ENCODE measurements at regions of chr4 and their contacts with region 1.

Region 1: DNA sequence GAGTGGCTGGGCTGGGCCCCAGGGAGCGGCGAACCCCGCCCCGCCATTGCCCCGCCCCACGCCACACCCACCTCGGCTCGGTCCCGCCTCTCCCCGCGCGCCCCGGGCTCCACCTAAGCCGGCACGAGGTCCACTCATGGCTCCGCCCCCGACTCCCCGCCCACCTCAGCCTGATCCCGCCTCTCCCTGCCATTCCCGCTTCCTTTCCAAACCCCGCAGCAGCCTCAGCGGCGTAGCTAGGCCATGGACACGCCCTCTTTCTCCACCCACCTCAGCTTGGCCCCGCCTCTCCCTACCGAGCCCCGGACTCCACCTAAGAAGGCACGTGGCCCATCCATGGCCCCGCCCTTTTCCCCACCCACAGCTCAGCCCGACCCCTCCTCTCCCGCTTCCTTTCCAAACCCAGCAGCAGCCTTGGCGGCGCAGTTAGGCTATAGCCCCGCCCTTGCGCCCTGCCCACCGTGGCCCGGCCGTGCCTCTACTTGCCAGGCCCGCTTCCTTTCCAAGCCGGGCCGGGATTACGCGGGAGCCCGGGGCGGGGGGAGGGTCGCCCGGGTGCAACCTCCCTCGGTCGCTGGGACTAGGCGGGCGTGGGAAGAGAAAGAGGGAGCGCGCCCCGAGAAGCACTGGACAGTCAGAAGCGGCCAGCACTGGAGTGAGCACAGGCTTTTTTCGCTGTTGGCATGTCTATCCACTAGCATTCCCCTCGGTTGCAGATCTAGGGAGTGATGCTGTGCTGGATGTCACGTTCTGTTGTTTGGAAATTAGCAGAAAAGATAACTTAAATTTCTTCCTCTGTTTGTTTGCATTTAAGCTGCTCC is at the start of gene RELL1:
- DNase-seq: peak; percentile 99 to 100
- ATAC-seq: peak; percentile 95 to 99 (median 97)
- H3K4me3 ChIP-seq: peak within 1 kb of the TSS; percentile 64 to 99 (median 93)
- H3K27ac ChIP-seq: peak within 1 kb of the TSS; percentile 78 to 99 (median 98)
- H3K4me1 ChIP-seq: peaks cover 0 to 45% (median 27%) of the 10 kb centered on the region in 9 donors
- H3K27me3 ChIP-seq: no peaks in the 10 kb centered on the region
- CTCF ChIP-seq: no peak
- total RNA-seq, gene RELL1: 18.1 to 39.9 (median 27.6) TPM

Region 2: GRCh38 chr4:37317104-37317643 is 369.4 kb before region 1 on chr4:
- intact Hi-C with region 1: no loop called
- DNase-seq: no peak
- ATAC-seq: no peak
- H3K4me3 ChIP-seq: no peak overlapping the region
- H3K27ac ChIP-seq: no peak overlapping the region
- H3K4me1 ChIP-seq: no peaks in the 10 kb centered on the region
- H3K27me3 ChIP-seq: no peaks in the 10 kb centered on the region
- CTCF ChIP-seq: no peak

Region 3: GRCh38 chr4:37452952-37453280 is 233.7 kb before region 1 on chr4:
- intact Hi-C with region 1: no loop called
- DNase-seq: peak in 1 of 2 donors; percentile 35
- ATAC-seq: peak; percentile 46 to 90 (median 68)
- H3K4me3 ChIP-seq: peak overlapping the region in 8 of 10 donors; percentile 46 to 64 (median 54)
- H3K27ac ChIP-seq: no peak overlapping the region
- H3K4me1 ChIP-seq: peaks cover 0 to 19% (median 10%) of the 10 kb centered on the region in 9 donors
- H3K27me3 ChIP-seq: peaks cover 0 to 95% (median 72%) of the 10 kb centered on the region in 7 donors
- CTCF ChIP-seq: peak in 7 of 9 donors; percentile 38 to 68 (median 57)

Region 4: DNA sequence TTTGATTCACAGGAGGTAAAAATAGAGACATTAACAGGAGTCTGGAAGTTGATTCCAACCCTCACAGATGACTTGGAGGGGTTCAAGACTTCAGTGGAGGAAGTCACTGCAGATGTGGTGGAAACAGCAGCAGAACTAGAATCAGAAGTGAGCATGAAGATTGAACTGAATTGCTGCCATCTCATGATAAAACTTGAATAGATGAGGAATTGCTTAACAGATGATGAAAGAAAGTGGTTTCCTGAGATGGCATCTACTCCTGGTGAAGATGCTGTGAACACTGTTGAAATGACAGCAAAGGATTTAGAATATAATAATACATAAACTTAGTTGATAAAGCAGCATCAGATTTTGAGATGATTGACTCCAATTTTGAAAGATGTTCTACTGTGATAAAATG is 77.0 kb before region 1 on chr4:
- intact Hi-C with region 1: loop called in 5 of 10 experiments (anchors 5 to 10 kb)
- DNase-seq: no peak
- ATAC-seq: no peak
- H3K4me3 ChIP-seq: no peak overlapping the region
- H3K27ac ChIP-seq: no peak overlapping the region
- H3K4me1 ChIP-seq: peaks cover 0 to 3% (median 0%) of the 10 kb centered on the region in 9 donors
- H3K27me3 ChIP-seq: no peaks in the 10 kb centered on the region
- CTCF ChIP-seq: no peak

Region 5: GRCh38 chr4:37648096-37648817 is 38.3 kb before region 1 on chr4:
- intact Hi-C with region 1: loop called in 1 of 10 experiments (anchors 1 kb)
- DNase-seq: peak; percentile 48 to 75
- ATAC-seq: peak; percentile 75 to 98 (median 93)
- H3K4me3 ChIP-seq: no peak overlapping the region
- H3K27ac ChIP-seq: peak overlapping the region in 8 of 10 donors; percentile 11 to 75 (median 67)
- H3K4me1 ChIP-seq: peaks cover 5 to 40% (median 21%) of the 10 kb centered on the region in 9 donors
- H3K27me3 ChIP-seq: no peaks in the 10 kb centered on the region
- CTCF ChIP-seq: no peak

Region 6: GRCh38 chr4:37793562-37793961 is 107.0 kb after region 1 on chr4:
- intact Hi-C with region 1: loop called in 3 of 10 experiments (anchors 5 to 10 kb)
- DNase-seq: peak in 1 of 2 donors; percentile 15
- ATAC-seq: peak in 7 of 8 donors; percentile 65 to 88 (median 83)
- H3K4me3 ChIP-seq: no peak overlapping the region
- H3K27ac ChIP-seq: no peak overlapping the region
- H3K4me1 ChIP-seq: peaks cover 0 to 7% (median 0%) of the 10 kb centered on the region in 9 donors
- H3K27me3 ChIP-seq: peaks cover 0 to 3% (median 0%) of the 10 kb centered on the region in 7 donors
- CTCF ChIP-seq: peak; percentile 56 to 81 (median 69)

Region 7: DNA sequence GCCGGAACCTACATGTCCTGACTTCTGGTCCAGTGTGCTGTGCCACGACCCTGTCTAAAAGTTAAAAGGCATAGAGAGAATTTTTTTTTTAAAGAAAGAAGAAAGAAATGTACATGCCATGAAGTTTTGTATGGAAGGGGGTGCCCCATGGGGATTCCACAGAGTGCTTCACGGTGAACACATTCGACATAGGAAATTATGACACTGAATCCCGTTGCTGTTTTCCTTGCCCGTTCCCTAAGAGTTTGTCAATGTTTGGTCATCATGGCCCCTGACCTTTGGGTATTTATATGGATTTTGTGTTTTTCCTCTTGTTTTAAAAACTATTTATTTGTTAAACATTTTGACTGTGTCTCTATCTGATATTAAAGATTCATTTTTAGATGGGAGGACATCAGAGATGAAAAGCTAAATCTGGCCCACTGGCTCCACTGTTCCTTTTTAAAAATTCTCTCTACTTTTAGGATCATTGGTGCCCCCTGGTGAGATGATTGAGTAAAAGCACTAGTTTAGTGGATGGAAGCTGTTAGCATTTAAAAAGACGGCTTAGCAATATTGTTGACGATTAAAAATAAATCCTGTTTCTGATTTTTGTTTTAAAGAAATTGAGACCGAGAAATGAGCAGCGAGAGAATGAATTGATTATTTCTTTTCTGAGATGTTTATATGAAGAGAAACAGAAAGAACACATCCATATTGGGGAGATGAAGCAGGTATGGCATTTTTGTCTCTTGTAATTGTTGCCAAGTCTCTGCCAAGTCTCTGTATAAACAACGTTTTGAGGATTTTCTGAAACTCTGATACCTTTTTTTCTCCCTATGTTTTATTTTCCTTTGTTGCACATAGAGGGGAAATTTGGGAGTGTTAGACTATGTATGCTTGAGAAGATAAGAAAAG is 348.7 kb after region 1 on chr4:
- intact Hi-C with region 1: loop called in 1 of 10 experiments (anchors 10 kb)
- DNase-seq: peak in 1 of 2 donors; percentile 77
- ATAC-seq: peak in 5 of 8 donors; percentile 47 to 86 (median 70)
- H3K4me3 ChIP-seq: no peak overlapping the region
- H3K27ac ChIP-seq: peak overlapping the region in 1 of 10 donors; percentile 26
- H3K4me1 ChIP-seq: peaks cover 0 to 8% (median 0%) of the 10 kb centered on the region in 9 donors
- H3K27me3 ChIP-seq: no peaks in the 10 kb centered on the region
- CTCF ChIP-seq: peak; percentile 55 to 81 (median 72)

Measured in heart right ventricle (tissue), 16 donors.